Panc1 (cell line): ENCODE measurements at regions of chr11 and their contacts with region 1.

Region 1: GRCh38 chr11:19218786-19219460 is 17.1 kb upstream of the CSRP3 start:
- DNase-seq: no peak
- ATAC-seq: no peak
- H3K4me3 ChIP-seq: no peak overlapping the region
- H3K27ac ChIP-seq: no peak overlapping the region
- H3K4me1 ChIP-seq: no peaks in the 10 kb centered on the region
- H3K27me3 ChIP-seq: no peaks in the 10 kb centered on the region
- CTCF ChIP-seq: no peak

Region 2: GRCh38 chr11:19027829-19028595 is 190.9 kb before region 1 on chr11:
- CTCF ChIA-PET with region 1: no interaction called
- POLR2A ChIA-PET with region 1: no interaction called
- in situ Hi-C with region 1: no loop called
- intact Hi-C with region 1: no loop called
- DNase-seq: peak; percentile 59
- ATAC-seq: no peak; the same call in 1 of the 2 replicates
- H3K4me3 ChIP-seq: no peak overlapping the region
- H3K27ac ChIP-seq: no peak overlapping the region
- H3K4me1 ChIP-seq: no peaks in the 10 kb centered on the region
- H3K27me3 ChIP-seq: peaks cover 15% of the 10 kb centered on the region
- CTCF ChIP-seq: no peak

Region 3: GRCh38 chr11:19193916-19194315 is 25.0 kb before region 1 on chr11:
- CTCF ChIA-PET with region 1: no interaction called
- POLR2A ChIA-PET with region 1: no interaction called
- in situ Hi-C with region 1: no loop called
- intact Hi-C with region 1: no loop called
- DNase-seq: no peak
- ATAC-seq: no peak
- H3K4me3 ChIP-seq: no peak overlapping the region
- H3K27ac ChIP-seq: no peak overlapping the region
- H3K4me1 ChIP-seq: no peaks in the 10 kb centered on the region
- H3K27me3 ChIP-seq: no peaks in the 10 kb centered on the region
- CTCF ChIP-seq: no peak

Region 4: DNA sequence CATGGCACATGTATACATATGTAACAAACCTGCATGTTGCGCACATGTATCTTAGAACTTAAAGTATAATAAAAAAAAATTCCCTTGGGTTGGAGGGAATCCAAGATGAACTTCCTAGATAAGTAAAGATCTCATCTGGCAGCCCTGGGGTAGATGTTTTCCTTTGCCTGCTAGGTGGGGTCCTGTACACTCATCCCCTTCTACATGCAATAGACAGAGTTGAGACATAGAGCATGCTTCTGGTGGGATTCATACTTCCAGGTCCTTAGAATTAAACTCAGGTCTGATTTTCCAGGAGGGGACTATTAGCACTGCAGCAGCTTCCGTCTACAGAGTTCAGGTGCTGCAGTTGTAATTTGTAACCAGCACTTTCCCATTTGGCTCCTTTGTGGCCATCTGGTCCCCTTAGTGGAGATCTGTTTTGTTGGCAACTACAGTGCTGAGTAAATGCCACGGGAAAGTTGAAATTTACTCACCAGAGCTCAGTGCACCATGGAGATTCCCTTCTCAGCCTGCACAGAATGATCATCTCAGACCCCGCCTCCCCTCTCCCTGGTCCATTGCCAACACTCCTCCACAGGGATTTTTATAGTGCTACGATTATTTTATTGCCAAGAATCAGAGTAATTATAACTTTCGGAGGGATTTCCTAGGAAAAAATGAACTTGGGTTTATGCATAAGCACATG is 241.9 kb after region 1 on chr11:
- CTCF ChIA-PET with region 1: no interaction called
- POLR2A ChIA-PET with region 1: interaction called, 12 read pairs
- in situ Hi-C with region 1: no loop called
- intact Hi-C with region 1: no loop called
- DNase-seq: no peak
- ATAC-seq: no peak
- H3K4me3 ChIP-seq: no peak overlapping the region
- H3K27ac ChIP-seq: no peak overlapping the region
- H3K4me1 ChIP-seq: no peaks in the 10 kb centered on the region
- H3K27me3 ChIP-seq: peaks cover 6% of the 10 kb centered on the region
- CTCF ChIP-seq: no peak